Caco-2 (cell line): ENCODE measurements at regions of chr21 and their contacts with region 1.

Region 1: GRCh38 chr21:42818328-42818749 is 61.0 kb downstream of the WDR4 start:
- DNase-seq: peak in 1 of 2 experiments; percentile 53
- H3K4me3 ChIP-seq: no peak overlapping the region
- H3K4me3 Mint-ChIP-seq: no peak overlapping the region
- H3K27ac Mint-ChIP-seq: no peak overlapping the region
- H3K4me1 ChIP-seq: no peaks in the 10 kb centered on the region
- H3K4me1 Mint-ChIP-seq: no peaks in the 10 kb centered on the region
- H3K27me3 ChIP-seq: no peaks in the 10 kb centered on the region
- H3K27me3 Mint-ChIP-seq: no peaks in the 10 kb centered on the region
- CTCF ChIP-seq: peak; percentile 53 to 58

Region 2: DNA sequence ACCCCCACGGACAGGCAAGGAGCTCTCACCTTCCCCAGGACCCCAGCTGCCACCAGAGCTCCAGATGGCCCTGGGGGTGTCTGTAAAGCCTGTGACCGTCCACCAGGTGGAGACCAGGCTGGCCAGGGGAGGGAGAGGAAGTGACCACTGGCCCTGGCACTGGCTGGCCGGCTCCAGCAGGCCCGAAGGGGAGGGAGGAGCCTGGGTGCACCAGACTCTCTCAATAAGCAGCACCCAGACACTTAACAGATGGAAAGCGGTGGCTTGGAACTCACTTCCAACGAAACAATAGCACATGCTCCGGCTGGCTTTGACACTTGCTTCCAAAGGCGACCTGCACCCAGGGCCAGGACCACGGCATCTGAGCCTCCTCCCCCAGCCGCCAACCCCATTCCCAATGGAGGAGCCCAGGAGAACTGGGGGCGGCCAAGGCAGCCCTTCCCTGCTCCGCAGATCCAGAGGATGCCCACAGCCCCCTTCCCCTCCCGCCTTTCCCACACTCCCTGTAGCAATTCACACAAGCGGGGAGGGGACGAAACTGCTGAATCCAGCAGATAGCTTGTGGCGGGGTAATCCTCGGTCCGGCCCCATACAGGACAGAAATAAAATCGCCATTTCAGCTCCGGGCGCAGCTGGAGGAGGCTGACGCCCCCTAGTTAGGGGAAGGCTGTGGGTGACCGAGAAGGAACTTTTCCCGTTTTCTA is 165.7 kb before region 1 on chr21:
- CTCF ChIA-PET with region 1: no interaction called
- POLR2A ChIA-PET with region 1: no interaction called
- intact Hi-C with region 1: loop called (anchors 1 kb)
- DNase-seq: peak; percentile 58 to 59
- H3K4me3 ChIP-seq: no peak overlapping the region
- H3K4me3 Mint-ChIP-seq: peak overlapping the region; percentile 70
- H3K27ac Mint-ChIP-seq: peak overlapping the region; percentile 53
- H3K4me1 ChIP-seq: peaks cover 8% of the 10 kb centered on the region
- H3K4me1 Mint-ChIP-seq: peaks cover 7% of the 10 kb centered on the region
- H3K27me3 ChIP-seq: no peaks in the 10 kb centered on the region
- H3K27me3 Mint-ChIP-seq: no peaks in the 10 kb centered on the region
- CTCF ChIP-seq: peak; percentile 31 to 48

Region 3: GRCh38 chr21:42796327-42797062 is 21.8 kb before region 1 on chr21:
- CTCF ChIA-PET with region 1: no interaction called
- POLR2A ChIA-PET with region 1: no interaction called
- intact Hi-C with region 1: loop called (anchors 1 kb)
- DNase-seq: peak in 1 of 2 experiments; percentile 14
- H3K4me3 ChIP-seq: no peak overlapping the region
- H3K4me3 Mint-ChIP-seq: no peak overlapping the region
- H3K27ac Mint-ChIP-seq: no peak overlapping the region
- H3K4me1 ChIP-seq: peaks cover 9% of the 10 kb centered on the region
- H3K4me1 Mint-ChIP-seq: peaks cover 8% of the 10 kb centered on the region
- H3K27me3 ChIP-seq: no peaks in the 10 kb centered on the region
- H3K27me3 Mint-ChIP-seq: no peaks in the 10 kb centered on the region
- CTCF ChIP-seq: no peak